ENCODE measurements at regions of chr11 and their contacts with region 1.

Region 1: GRCh38 chr11:59822989-59823566 is 12.5 kb upstream of the MRPL16 start:
- ATAC-seq: peak in 7 of 8 experiments; percentile 40 to 95 (median 78)
- H3K4me3 ChIP-seq: no peak overlapping the region
- H3K27ac ChIP-seq: no peak overlapping the region
- H3K4me1 ChIP-seq: no peaks in the 10 kb centered on the region

Region 2: GRCh38 chr11:59401262-59401552 is 421.9 kb before region 1 on chr11:
- in situ Hi-C with region 1: no loop called
- ATAC-seq: no peak
- H3K4me3 ChIP-seq: no peak overlapping the region
- H3K27ac ChIP-seq: no peak overlapping the region
- H3K4me1 ChIP-seq: no peaks in the 10 kb centered on the region

Region 3: DNA sequence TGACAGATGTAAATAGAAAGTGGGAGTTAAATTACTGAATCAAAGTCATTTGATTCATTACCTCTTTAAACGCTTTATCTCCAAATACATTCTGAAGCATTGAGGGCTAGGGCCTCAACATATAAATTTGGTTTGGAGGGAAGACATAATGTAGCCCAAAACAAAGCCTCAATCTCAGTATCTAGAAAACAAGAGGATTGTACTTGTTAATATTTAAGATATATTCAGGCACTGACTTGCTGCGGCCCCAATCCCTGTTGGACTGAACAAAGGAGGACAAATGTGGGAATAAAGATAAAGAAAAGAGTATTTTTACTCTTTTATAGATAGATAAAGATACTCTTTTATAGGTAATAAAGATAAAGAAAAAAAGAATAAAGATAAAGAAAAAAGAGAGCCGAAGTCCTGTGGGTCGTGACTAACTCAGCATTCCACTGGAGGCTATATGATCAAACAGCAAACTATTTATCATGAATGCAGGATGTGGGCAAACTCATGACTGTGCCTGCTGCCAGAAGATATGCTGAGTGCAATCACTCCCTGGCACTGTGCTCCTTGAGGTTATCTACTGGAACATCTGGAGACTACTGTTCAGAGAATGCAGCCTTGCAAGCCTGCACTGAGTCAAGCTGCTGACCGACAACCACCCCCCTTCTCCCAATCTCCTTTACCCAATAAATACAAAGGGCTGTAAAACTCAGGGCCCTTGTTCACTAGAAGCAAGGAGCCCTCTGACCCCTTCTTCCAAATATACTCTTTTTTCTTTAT is 116.4 kb before region 1 on chr11:
- in situ Hi-C with region 1: no loop called
- ATAC-seq: no peak
- H3K4me3 ChIP-seq: no peak overlapping the region
- H3K27ac ChIP-seq: no peak overlapping the region
- H3K4me1 ChIP-seq: no peaks in the 10 kb centered on the region

Region 4: DNA sequence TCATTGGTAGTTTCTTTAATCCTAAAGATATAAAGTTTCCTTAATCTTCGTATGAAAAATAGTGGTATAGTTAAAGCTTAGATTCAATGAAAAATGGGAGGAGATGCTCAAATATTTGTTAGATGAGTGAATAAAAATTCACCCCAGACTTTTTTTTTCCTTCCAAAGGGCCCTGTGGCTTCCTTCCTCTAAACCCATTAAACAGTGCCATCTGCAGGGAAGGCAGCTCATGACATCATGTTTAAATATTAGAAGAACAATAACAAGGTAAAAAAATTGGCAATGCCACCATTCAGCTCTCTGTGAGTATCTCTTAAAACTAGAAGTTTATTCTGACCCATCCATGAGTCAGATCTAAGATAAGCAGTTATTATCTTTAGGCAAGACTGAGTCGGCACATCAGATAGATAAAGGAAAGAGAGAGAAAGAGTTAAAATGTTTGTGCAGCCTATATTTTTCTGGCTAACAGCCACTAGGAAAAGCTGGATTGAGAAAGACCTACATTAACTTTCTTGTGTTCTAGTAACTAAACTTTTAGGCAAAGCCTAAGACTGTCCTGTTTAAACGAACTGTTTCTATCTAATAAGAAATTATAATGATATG is 96.0 kb after region 1 on chr11:
- in situ Hi-C with region 1: loop called in 2 of 9 experiments (anchors 5 to 25 kb)
- ATAC-seq: peak in 3 of 8 experiments; percentile 48 to 68 (median 58)
- H3K4me3 ChIP-seq: no peak overlapping the region
- H3K27ac ChIP-seq: no peak overlapping the region
- H3K4me1 ChIP-seq: no peaks in the 10 kb centered on the region

Region 5: DNA sequence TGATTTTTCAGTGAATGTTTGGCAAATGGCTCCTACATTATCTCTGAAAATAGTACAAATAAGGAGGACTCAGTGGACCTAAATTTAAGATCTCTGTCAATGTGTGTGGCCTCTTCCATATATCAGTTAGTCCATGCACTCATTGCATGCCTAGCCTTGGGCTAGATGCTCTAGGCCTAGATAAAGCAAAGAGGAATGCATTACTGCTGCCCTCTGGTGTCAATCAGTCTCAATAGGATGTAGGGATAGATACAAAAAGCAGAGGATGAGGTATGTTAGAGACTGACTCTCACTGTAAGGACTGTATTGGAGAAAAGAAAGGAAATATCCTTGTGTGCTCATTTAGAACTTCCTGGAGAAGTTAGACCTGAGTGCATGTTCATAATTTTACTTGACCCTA is 307.4 kb after region 1 on chr11:
- in situ Hi-C with region 1: loop called in 3 of 9 experiments (anchors 10 to 25 kb)
- ATAC-seq: peak; percentile 53 to 89 (median 70)
- H3K4me3 ChIP-seq: no peak overlapping the region
- H3K27ac ChIP-seq: no peak overlapping the region
- H3K4me1 ChIP-seq: no peaks in the 10 kb centered on the region

Measured in motor neuron (in vitro differentiated cells).